ENCODE measurements at regions of chr1 and their contacts with region 1.

Region 1: GRCh38 chr1:154546264-154547063 is 12.0 kb downstream of the UBE2Q1 start:
- DNase-seq: no peak
- H3K4me3 ChIP-seq: no peak overlapping the region
- CTCF ChIP-seq: peak; percentile 85

Region 2: DNA sequence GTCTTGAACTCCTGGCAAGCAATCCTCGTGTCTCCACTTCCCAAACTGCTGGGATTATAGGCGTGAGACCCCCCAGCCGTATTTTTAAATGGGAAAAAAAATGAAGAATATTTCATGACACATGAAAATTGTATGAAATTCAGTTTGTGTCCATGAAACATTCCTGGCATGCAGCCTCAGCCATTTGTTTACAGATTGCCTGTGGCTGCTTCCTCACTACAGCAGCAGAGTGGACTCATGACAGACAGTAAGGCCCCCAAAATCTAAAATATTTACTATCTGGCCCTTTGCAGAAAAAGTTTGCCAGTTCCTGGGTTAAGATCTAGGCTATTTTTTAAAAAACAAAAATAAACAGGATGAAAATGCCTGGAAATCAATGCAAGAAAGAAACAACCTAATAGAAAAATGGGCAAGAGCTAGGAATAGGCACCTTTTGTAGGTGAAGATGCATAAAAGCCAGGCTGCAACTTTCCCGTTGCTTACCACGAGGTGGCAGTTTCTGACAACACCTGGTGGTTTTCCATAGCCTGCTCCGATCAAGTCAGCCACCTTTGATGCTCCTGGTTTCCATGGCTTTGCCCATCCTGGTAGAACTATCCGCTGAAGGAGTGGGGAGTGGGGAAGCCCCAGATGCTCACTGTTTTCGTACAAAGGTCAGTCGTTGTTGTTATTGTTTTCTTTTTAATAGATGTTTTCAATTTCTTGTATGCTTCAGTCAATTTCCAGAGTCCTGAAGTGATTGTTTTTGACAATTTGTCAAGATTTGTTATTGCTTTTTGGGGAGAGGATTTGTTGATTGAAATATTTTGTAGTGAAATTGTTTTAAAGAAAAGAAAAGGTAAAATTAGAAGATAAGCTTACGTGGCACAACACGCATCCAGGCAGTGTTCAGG is 12.3 kb before region 1 on chr1:
- CTCF ChIA-PET with region 1: interaction called, 12 read pairs
- POLR2A ChIA-PET with region 1: interaction called, 5 read pairs
- DNase-seq: no peak
- H3K4me3 ChIP-seq: no peak overlapping the region
- CTCF ChIP-seq: peak; percentile 35

Measured in AG04449 (cell line).